Natural killer cell (primary cell): ENCODE measurements at regions of chr17 and their contacts with region 1.

Region 1: GRCh38 chr17:43940630-43941029 is 1.6 kb downstream of the PPY start:
- DNase-seq: peak in 1 of 2 donors; percentile 33
- ATAC-seq: no peak
- H3K4me3 ChIP-seq: no peak overlapping the region
- H3K4me3 Mint-ChIP-seq: no peak overlapping the region
- H3K27ac ChIP-seq: no peak overlapping the region
- H3K27ac Mint-ChIP-seq: no peak overlapping the region
- H3K4me1 ChIP-seq: peaks cover 14% of the 10 kb centered on the region
- H3K4me1 Mint-ChIP-seq: peaks cover 0 to 15% of the 10 kb centered on the region in 2 donors
- H3K27me3 ChIP-seq: peaks cover 3% of the 10 kb centered on the region
- H3K27me3 Mint-ChIP-seq: peaks cover 12 to 16% of the 10 kb centered on the region in 2 donors
- CTCF ChIP-seq: no peak

Region 2: GRCh38 chr17:43983515-43984411 is 43.1 kb after region 1 on chr17:
- intact Hi-C with region 1: no loop called
- DNase-seq: peak in 1 of 2 donors; percentile 19
- ATAC-seq: peak in 1 of 3 donors; percentile 54
- H3K4me3 ChIP-seq: no peak overlapping the region
- H3K4me3 Mint-ChIP-seq: peak overlapping the region; percentile 37
- H3K27ac ChIP-seq: no peak overlapping the region
- H3K27ac Mint-ChIP-seq: no peak overlapping the region
- H3K4me1 ChIP-seq: peaks cover 4% of the 10 kb centered on the region
- H3K4me1 Mint-ChIP-seq: no peaks in the 10 kb centered on the region
- H3K27me3 ChIP-seq: peaks cover 20% of the 10 kb centered on the region
- H3K27me3 Mint-ChIP-seq: peaks cover 46 to 57% of the 10 kb centered on the region in 2 donors
- CTCF ChIP-seq: no peak

Region 3: GRCh38 chr17:43994272-43995149 is 53.9 kb after region 1 on chr17:
- intact Hi-C with region 1: loop called (anchors 1 kb)
- DNase-seq: peak; percentile 48 to 80
- ATAC-seq: peak; percentile 85 to 98 (median 95)
- H3K4me3 ChIP-seq: no peak overlapping the region
- H3K4me3 Mint-ChIP-seq: no peak overlapping the region
- H3K27ac ChIP-seq: no peak overlapping the region
- H3K27ac Mint-ChIP-seq: no peak overlapping the region
- H3K4me1 ChIP-seq: peaks cover 7% of the 10 kb centered on the region
- H3K4me1 Mint-ChIP-seq: no peaks in the 10 kb centered on the region
- H3K27me3 ChIP-seq: peaks cover 18% of the 10 kb centered on the region
- H3K27me3 Mint-ChIP-seq: peaks cover 16 to 23% of the 10 kb centered on the region in 2 donors
- CTCF ChIP-seq: peak; percentile 66

Region 4: GRCh38 chr17:44044067-44044466 is 103.4 kb after region 1 on chr17:
- intact Hi-C with region 1: loop called (anchors 1 kb)
- DNase-seq: no peak
- ATAC-seq: no peak
- H3K4me3 ChIP-seq: no peak overlapping the region
- H3K4me3 Mint-ChIP-seq: no peak overlapping the region
- H3K27ac ChIP-seq: no peak overlapping the region
- H3K27ac Mint-ChIP-seq: no peak overlapping the region
- H3K4me1 ChIP-seq: no peaks in the 10 kb centered on the region
- H3K4me1 Mint-ChIP-seq: peaks cover 8 to 27% of the 10 kb centered on the region in 2 donors
- H3K27me3 ChIP-seq: no peaks in the 10 kb centered on the region
- H3K27me3 Mint-ChIP-seq: no peaks in the 10 kb centered on the region
- CTCF ChIP-seq: no peak

Region 5: DNA sequence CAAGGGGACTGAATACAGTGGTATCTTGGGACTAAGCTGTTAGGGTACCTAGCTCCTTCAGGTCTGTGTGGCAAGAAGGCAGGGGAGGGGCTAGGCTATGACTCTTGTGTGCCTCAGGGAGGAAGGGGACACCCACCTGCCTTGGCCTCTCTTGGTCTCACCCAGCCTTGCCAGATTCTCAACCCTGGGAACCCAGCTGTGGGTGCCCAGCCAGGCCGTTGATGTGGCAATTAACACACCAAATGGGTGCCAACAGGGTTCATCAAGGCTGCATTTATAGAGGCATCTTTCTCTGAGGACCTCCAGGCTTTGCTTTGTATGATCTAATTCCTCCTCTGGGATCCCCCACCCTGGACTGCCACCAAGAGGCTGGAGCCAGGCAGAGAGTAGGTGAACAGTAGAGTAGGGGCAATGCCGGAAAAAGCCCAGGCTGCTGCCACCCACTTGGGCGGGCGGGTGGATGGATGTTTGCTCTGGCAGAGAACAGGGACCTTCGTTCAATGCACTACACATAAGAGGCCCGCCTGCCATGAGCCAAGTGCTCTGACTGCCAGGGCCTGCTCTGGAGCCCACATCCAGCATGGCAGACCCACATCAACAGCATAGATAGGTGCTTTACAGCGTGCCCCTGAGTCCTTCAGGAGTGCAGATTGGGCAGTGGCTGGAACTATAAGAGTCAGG is 226.7 kb after region 1 on chr17:
- intact Hi-C with region 1: loop called (anchors 5 kb)
- DNase-seq: no peak
- ATAC-seq: no peak
- H3K4me3 ChIP-seq: no peak overlapping the region
- H3K4me3 Mint-ChIP-seq: no peak overlapping the region
- H3K27ac ChIP-seq: no peak overlapping the region
- H3K27ac Mint-ChIP-seq: no peak overlapping the region
- H3K4me1 ChIP-seq: peaks cover 5% of the 10 kb centered on the region
- H3K4me1 Mint-ChIP-seq: peaks cover 9 to 13% of the 10 kb centered on the region in 2 donors
- H3K27me3 ChIP-seq: no peaks in the 10 kb centered on the region
- H3K27me3 Mint-ChIP-seq: no peaks in the 10 kb centered on the region
- CTCF ChIP-seq: no peak

Region 6: DNA sequence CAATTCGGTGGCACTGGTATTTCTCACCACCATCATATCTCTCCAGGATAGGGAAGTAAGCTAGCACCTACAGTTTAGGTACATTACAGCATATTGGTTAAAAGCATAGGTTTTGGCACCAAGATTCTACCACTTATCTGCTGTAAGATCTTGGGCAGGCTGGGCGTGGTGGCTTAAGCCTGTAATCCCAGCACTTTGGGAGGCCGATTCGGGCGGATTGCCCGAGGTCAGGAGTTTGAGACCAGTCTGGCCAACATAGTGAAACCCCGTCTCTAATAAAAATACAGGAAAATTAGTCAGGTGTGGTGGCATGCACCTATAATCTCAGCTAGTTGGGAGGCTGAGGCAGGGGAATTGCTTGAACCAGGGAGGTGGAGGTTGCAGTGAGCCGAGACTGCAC is 511.2 kb after region 1 on chr17:
- intact Hi-C with region 1: no loop called
- DNase-seq: no peak
- ATAC-seq: no peak
- H3K4me3 ChIP-seq: no peak overlapping the region
- H3K4me3 Mint-ChIP-seq: no peak overlapping the region
- H3K27ac ChIP-seq: no peak overlapping the region
- H3K27ac Mint-ChIP-seq: peak overlapping the region; percentile 22 to 77
- H3K4me1 ChIP-seq: no peaks in the 10 kb centered on the region
- H3K4me1 Mint-ChIP-seq: peaks cover 49 to 54% of the 10 kb centered on the region in 2 donors
- H3K27me3 ChIP-seq: no peaks in the 10 kb centered on the region
- H3K27me3 Mint-ChIP-seq: no peaks in the 10 kb centered on the region
- CTCF ChIP-seq: no peak